ENCODE measurements at regions of chr2 and their contacts with region 1.

Region 1: DNA sequence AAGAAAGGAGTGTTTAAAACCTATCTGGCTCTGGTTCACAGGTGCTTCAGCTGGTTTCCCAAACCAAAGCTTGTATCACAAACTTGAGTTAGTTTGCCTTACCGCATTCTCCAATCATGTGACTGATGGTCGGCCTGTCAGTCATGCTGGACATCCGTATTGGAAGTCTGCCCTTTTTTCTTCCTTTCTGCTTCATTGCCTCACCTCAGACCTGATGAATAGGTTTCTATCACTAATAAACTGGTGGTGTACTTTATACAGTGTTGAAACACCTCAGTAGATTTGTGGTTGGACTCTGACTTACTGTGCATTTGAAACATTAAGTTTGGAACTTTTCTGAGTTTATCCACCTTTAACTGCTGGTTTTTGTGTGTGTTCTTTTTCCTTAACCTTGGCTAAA is 84.1 kb downstream of the R3HDM1 start:
- DNase-seq: no peak
- ATAC-seq: no peak
- H3K4me3 ChIP-seq: no peak overlapping the region
- H3K4me3 Mint-ChIP-seq: no peak overlapping the region
- H3K27ac ChIP-seq: no peak overlapping the region
- H3K27ac Mint-ChIP-seq: no peak overlapping the region
- H3K4me1 ChIP-seq: no peaks in the 10 kb centered on the region
- H3K4me1 Mint-ChIP-seq: no peaks in the 10 kb centered on the region
- H3K27me3 ChIP-seq: no peaks in the 10 kb centered on the region
- H3K27me3 Mint-ChIP-seq: no peaks in the 10 kb centered on the region

Region 2: DNA sequence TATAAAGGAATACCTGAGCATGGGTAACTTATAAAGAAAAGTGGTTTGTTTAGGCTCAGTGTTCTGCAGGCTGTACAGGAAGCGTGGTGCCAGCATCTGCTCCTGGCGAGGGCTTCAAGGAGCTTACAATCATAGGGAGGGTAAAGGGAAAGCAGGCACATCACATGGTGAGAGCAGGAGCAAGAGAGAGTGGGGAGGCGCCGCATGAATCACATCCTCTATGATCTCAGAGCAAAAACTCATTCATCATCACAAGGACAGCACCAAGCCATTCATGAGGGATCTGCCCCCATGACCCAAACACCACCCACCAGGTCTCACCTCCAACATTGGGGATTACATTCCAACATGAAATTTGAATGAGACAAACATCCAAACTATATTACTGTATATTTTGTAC is 51.6 kb before region 1 on chr2:
- CTCF ChIA-PET with region 1: no interaction called
- POLR2A ChIA-PET with region 1: interaction called in 1 of 2 experiments, 14 read pairs
- DNase-seq: no peak
- ATAC-seq: no peak
- H3K4me3 ChIP-seq: no peak overlapping the region
- H3K4me3 Mint-ChIP-seq: no peak overlapping the region
- H3K27ac ChIP-seq: no peak overlapping the region
- H3K27ac Mint-ChIP-seq: no peak overlapping the region
- H3K4me1 ChIP-seq: no peaks in the 10 kb centered on the region
- H3K4me1 Mint-ChIP-seq: peaks cover 4 to 7% (median 5%) of the 10 kb centered on the region in 3 donors
- H3K27me3 ChIP-seq: no peaks in the 10 kb centered on the region
- H3K27me3 Mint-ChIP-seq: no peaks in the 10 kb centered on the region

Region 3: DNA sequence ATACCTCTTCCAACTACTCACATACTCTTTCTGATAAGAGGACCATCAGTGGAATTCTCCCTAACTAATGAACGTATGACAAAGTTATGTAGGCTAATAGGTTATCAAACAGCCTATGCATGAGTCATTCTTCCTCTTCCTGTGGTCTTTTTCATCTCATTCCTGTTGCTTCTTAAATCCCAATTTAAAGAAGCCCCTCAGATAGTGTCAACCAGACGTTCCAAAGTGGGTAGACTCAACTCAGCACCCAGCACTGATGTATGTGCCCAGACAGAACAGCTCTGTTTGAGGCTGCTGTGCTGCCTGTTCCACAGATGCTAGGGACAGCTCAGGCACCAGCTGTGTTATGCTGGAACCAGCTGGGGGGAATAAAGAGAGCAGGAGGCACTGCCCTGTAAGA is 450.0 kb after region 1 on chr2:
- CTCF ChIA-PET with region 1: no interaction called
- POLR2A ChIA-PET with region 1: no interaction called
- DNase-seq: peak in 2 of 35 experiments; percentile 5 to 21
- ATAC-seq: peak in 3 of 4 experiments; percentile 49 to 55 (median 51)
- H3K4me3 ChIP-seq: no peak overlapping the region
- H3K4me3 Mint-ChIP-seq: peak overlapping the region in 2 of 3 donors; percentile 31 to 43
- H3K27ac ChIP-seq: no peak overlapping the region
- H3K27ac Mint-ChIP-seq: peak overlapping the region in 1 of 2 donors; percentile 37
- H3K4me1 ChIP-seq: peaks cover 0 to 16% of the 10 kb centered on the region in 2 experiments
- H3K4me1 Mint-ChIP-seq: peaks cover 54 to 71% (median 58%) of the 10 kb centered on the region in 3 donors
- H3K27me3 ChIP-seq: no peaks in the 10 kb centered on the region
- H3K27me3 Mint-ChIP-seq: no peaks in the 10 kb centered on the region

Measured in T-cell (primary cell).